Mammary epithelial cell (primary cell): ENCODE measurements at regions of chr17 and their contacts with region 1.

Region 1: DNA sequence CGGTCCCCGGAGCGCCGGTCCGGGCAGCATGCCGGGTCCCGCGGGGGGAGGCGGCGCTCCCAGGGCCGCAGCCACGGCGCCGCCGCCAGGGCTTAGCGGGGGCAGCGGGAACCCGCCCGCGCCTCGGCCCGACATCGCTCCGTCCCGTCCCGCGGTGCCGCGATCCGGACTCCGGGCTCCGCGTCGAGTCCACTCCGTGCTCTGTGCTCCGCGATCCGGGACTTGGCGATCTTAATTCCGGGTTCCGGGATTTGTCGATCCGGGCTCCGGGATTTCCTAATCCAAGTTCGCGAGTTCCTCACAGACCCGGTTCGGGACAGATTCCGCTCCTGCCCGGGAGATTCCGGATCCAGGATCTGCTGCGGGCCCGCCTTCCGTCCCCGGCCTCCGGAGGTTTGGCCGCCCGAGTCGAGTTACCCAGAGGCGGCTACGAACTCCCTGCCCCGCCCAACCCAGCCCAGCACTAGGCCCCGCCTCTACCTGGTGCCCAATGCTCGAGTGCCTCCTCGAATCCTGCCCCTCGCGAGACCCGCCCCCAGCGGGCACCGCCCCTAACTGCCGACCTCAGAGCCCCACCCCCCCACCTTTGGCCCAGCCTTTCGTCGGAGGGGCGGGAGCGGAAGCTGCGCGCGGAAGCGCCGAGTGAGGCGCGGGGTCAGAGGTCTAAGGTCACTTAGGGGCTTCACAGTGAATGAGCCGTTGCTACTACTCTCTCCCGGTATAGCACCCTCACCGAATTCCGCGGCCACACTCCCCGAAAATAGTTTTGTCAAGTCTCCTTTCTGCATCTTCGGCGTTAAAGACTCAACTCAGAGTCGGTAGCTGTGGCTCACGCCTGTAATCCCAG is at the start of gene SMARCD2:
- DNase-seq: peak; percentile 99
- H3K4me3 ChIP-seq: peak within 1 kb of the TSS; percentile 70 to 98 (median 90)
- H3K27ac ChIP-seq: peak within 1 kb of the TSS; percentile 52
- H3K4me1 ChIP-seq: peaks cover 35% of the 10 kb centered on the region
- H3K27me3 ChIP-seq: no peaks in the 10 kb centered on the region
- CTCF ChIP-seq: no peak
- total RNA-seq, gene SMARCD2: 66.1 to 75.3 TPM

Region 2: DNA sequence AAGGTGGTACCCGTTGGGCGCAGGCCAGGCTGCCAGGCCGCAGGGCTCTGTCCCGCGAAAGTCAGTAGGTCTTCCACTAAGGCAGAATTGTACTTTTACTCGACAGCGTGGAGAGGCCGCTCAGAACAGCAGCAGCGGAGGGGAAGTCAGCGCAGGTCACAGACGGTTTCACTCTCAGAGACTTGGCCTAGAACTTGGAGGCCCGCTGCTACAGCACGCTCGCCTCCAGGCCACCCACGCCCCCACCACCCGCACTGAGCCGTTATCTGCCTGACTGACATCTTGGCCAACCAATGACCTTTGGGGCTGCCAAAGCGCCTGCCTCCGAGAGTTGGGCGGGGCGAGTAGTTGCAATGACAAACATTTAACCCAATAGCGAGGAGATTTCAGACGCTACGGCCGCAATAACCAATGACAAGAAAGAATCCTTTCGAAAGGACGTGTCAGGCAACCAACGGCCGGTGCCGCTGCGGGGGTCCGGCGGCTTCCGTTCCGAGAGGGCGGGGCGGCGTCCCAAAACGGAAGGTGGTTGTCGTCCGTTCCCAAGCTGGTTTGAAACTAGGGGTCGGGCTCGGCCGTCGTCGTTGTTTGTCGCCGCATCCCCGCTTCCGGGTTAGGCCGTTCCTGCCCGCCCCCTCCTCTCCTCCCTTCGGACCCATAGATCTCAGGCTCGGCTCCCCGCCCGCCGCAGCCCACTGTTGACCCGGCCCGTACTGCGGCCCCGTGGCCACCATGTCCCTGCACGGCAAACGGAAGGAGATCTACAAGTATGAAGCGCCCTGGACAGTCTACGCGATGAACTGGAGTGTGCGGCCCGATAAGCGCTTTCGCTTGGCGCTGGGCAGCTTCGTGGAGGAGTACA is 292.6 kb before region 1 on chr17 and contains the start of gene DCAF7:
- CTCF ChIA-PET with region 1: no interaction called
- dilution Hi-C with region 1: no loop called
- in situ Hi-C with region 1: no loop called
- intact Hi-C with region 1: loop called (anchors 5 kb)
- DNase-seq: peak; percentile 100
- H3K4me3 ChIP-seq: peak within 1 kb of the TSS; percentile 86 to 98 (median 95)
- H3K27ac ChIP-seq: peak within 1 kb of the TSS; percentile 70
- H3K4me1 ChIP-seq: peaks cover 27% of the 10 kb centered on the region
- H3K27me3 ChIP-seq: no peaks in the 10 kb centered on the region
- CTCF ChIP-seq: no peak
- total RNA-seq, gene DCAF7: 47.5 to 71.3 TPM

Region 3: DNA sequence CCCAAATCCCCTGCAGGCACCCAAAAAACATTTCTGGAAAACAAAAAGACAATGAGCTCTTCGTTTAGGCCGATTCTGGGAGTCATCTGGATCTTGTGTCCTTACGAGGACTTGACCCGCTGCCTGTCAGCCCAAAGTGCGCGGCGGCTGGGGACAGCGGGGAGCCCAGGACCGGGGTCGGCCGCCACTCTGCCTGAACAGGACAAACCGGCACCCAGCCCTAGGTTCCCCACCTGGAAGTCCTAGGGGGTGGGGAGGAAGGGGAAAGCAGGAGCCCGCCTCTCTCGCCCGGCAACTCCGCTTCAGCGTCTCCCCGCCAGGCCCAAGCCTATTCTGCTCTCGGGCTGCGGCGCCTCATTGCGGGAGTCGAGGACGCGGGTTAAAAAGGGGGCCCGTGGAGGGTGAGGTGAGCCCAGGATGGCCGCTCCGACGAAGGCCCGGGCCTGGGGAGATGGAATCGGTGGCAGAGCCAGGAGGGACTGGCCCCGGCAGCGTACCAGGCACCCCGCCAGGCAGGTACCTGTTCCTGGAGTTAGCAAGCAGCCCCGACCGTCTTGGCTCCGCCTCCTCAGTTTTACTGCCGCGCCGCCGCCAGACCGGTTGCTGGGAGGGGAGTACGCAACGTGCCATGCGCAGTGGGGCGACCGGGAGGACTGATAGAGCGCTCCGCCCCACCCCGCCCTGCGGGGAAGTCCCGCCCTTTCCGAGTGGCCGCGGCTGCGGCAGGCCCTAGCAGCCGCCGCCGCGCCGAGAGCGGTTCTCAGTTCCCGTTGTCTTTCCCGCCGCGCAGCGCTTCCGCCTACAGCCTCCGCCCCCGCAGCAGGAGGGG is 101.3 kb before region 1 on chr17 and contains the start of gene STRADA:
- CTCF ChIA-PET with region 1: no interaction called
- dilution Hi-C with region 1: no loop called
- in situ Hi-C with region 1: no loop called
- intact Hi-C with region 1: loop called (anchors 1 kb)
- DNase-seq: peak; percentile 99
- H3K4me3 ChIP-seq: peak within 1 kb of the TSS; percentile 71 to 89 (median 80)
- H3K27ac ChIP-seq: peak within 1 kb of the TSS; percentile 85
- H3K4me1 ChIP-seq: peaks cover 18% of the 10 kb centered on the region
- H3K27me3 ChIP-seq: no peaks in the 10 kb centered on the region
- CTCF ChIP-seq: no peak
- total RNA-seq, gene STRADA: 34.3 to 38.9 TPM

Region 4: GRCh38 chr17:63773381-63774140 is 69.2 kb before region 1 on chr17 and contains the start of gene CCDC47:
- CTCF ChIA-PET with region 1: no interaction called
- dilution Hi-C with region 1: loop called (anchors 5 kb)
- in situ Hi-C with region 1: no loop called
- intact Hi-C with region 1: loop called (anchors 2 kb)
- DNase-seq: peak; percentile 100
- H3K4me3 ChIP-seq: peak within 1 kb of the TSS; percentile 88 to 95 (median 94)
- H3K27ac ChIP-seq: peak within 1 kb of the TSS; percentile 97
- H3K4me1 ChIP-seq: peaks cover 6% of the 10 kb centered on the region
- H3K27me3 ChIP-seq: no peaks in the 10 kb centered on the region
- CTCF ChIP-seq: no peak
- total RNA-seq, gene CCDC47: 60.5 to 74.7 TPM

Region 5: GRCh38 chr17:63786971-63787711 is 55.6 kb before region 1 on chr17:
- CTCF ChIA-PET with region 1: no interaction called
- dilution Hi-C with region 1: no loop called
- in situ Hi-C with region 1: no loop called
- intact Hi-C with region 1: loop called (anchors 1 kb)
- DNase-seq: peak; percentile 94
- H3K4me3 ChIP-seq: no peak overlapping the region
- H3K27ac ChIP-seq: peak overlapping the region; percentile 99
- H3K4me1 ChIP-seq: peaks cover 39% of the 10 kb centered on the region
- H3K27me3 ChIP-seq: no peaks in the 10 kb centered on the region
- CTCF ChIP-seq: no peak

Region 6: GRCh38 chr17:63816669-63817068 is 26.1 kb before region 1 on chr17:
- CTCF ChIA-PET with region 1: no interaction called
- dilution Hi-C with region 1: no loop called
- in situ Hi-C with region 1: no loop called
- intact Hi-C with region 1: no loop called
- DNase-seq: no peak
- H3K4me3 ChIP-seq: no peak overlapping the region
- H3K27ac ChIP-seq: no peak overlapping the region
- H3K4me1 ChIP-seq: no peaks in the 10 kb centered on the region
- H3K27me3 ChIP-seq: no peaks in the 10 kb centered on the region
- CTCF ChIP-seq: no peak

Region 7: GRCh38 chr17:63827002-63827771 is 15.6 kb before region 1 on chr17 and contains the starts of genes FTSJ3 and PSMC5:
- CTCF ChIA-PET with region 1: no interaction called
- dilution Hi-C with region 1: no loop called
- in situ Hi-C with region 1: no loop called
- intact Hi-C with region 1: loop called (anchors 2 kb)
- DNase-seq: peak; percentile 95
- H3K4me3 ChIP-seq: peak within 1 kb of the TSS; percentile 68 to 88 (median 83)
- H3K27ac ChIP-seq: peak within 1 kb of the TSS; percentile 83
- H3K4me1 ChIP-seq: peaks cover 18% of the 10 kb centered on the region
- H3K27me3 ChIP-seq: no peaks in the 10 kb centered on the region
- CTCF ChIP-seq: peak; percentile 30 to 51
- total RNA-seq, gene FTSJ3: 39.5 to 49.0 TPM
- total RNA-seq, gene PSMC5: 44.8 to 132 TPM